ENCODE measurements at regions of chr5 and their contacts with region 1.

Region 1: GRCh38 chr5:33997331-33997983 is 10.4 kb downstream of the AMACR start:
- DNase-seq: peak; percentile 55
- ATAC-seq: peak; percentile 67
- H3K4me3 Mint-ChIP-seq: no peak overlapping the region
- H3K27ac Mint-ChIP-seq: no peak overlapping the region
- H3K4me1 Mint-ChIP-seq: peaks cover 28% of the 10 kb centered on the region
- H3K27me3 Mint-ChIP-seq: no peaks in the 10 kb centered on the region

Region 2: GRCh38 chr5:33936004-33936380 is 61.5 kb before region 1 on chr5:
- CTCF ChIA-PET with region 1: no interaction called
- POLR2A ChIA-PET with region 1: no interaction called
- DNase-seq: peak; percentile 65
- ATAC-seq: peak; percentile 82
- H3K4me3 Mint-ChIP-seq: no peak overlapping the region
- H3K27ac Mint-ChIP-seq: no peak overlapping the region
- H3K4me1 Mint-ChIP-seq: no peaks in the 10 kb centered on the region
- H3K27me3 Mint-ChIP-seq: peaks cover 53% of the 10 kb centered on the region

Region 3: GRCh38 chr5:33958176-33958575 is 39.3 kb before region 1 on chr5:
- CTCF ChIA-PET with region 1: no interaction called
- POLR2A ChIA-PET with region 1: no interaction called
- DNase-seq: no peak
- ATAC-seq: no peak
- H3K4me3 Mint-ChIP-seq: no peak overlapping the region
- H3K27ac Mint-ChIP-seq: no peak overlapping the region
- H3K4me1 Mint-ChIP-seq: no peaks in the 10 kb centered on the region
- H3K27me3 Mint-ChIP-seq: peaks cover 3% of the 10 kb centered on the region

Region 4: DNA sequence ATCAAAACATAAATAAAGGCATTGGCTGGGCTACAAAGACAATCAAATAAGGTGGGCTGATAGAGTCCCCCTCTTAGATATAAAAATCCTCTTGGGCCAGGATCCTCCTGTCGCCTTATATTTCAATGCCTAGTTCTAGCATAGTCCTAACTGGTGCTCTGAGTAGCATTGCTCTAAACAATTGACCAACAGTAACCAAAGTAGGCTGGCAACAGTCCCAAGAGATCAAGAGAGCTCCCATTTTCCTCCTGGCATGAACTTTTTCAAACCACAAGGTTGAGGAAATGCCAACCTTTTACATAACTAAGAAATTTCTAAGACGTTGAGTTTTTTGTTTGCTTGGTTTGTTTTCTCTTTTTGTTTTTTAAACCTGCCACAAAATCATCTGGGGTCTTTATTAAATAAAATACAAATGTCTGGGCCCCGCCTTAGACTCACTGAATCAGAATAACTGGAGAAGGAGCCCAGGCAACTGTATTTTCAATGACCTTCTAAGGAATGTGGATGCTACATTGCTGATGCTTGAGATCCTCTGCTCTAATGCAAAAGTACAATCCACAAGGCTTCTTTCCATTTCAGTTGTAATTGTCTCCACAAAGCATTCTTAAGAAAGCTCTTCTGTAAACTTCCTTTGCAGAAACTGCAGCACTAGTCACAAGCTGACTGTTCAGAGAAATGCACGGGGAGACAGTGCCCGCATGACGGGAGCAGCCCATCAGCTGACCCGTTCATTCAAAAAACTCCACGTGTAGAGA is 15.9 kb before region 1 on chr5:
- CTCF ChIA-PET with region 1: interaction called, 11 read pairs
- POLR2A ChIA-PET with region 1: interaction called, 3 read pairs
- DNase-seq: no peak
- ATAC-seq: no peak
- H3K4me3 Mint-ChIP-seq: no peak overlapping the region
- H3K27ac Mint-ChIP-seq: no peak overlapping the region
- H3K4me1 Mint-ChIP-seq: no peaks in the 10 kb centered on the region
- H3K27me3 Mint-ChIP-seq: no peaks in the 10 kb centered on the region

Region 5: DNA sequence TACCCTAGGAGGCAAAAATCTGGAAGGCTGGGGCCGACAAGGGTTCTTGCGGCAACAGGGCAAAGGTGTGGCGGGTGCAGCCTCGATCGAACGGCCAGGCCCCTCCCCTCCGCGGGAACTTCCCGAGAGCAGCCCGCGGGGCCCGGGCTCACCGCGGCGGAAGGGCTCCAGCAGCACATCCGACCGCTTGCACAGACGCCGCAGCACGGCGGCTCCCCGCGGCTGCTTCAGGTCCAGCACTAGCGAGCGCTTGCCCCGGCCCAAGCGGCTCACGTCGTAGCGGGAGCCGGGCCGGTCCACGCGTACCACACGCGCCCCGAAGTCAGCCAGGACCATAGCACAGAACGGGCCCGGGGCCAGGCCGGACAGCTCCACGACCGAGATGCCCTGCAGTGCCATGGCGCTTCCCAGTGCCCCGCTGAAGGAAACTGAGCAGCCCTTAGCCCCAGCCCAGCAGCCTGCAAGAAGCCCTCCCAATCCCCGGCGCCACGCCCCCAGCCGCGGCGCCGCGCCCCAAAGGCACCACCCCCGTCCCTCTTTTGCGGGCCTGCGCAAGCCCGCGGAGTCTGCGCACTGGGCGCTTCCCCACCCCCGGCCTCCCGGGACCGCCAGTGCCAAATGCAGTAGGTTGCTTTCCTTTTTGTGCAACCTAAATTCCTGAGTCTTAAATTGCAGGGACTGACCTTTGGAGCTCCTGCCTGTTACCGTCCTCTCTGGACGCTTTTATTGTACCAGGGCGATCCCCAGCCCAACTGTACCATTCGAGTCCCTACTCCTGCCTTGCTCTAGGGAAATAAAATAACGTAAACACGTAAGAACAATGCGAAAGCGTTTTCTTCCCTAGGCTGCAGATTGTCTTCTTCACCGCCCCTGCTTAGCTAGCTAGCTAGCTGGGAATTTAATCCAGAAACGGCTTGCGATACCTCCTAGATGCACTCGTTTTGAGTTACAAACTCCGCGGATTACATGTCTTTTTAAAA is 10.5 kb after region 1 on chr5 and contains the start of gene AMACR:
- CTCF ChIA-PET with region 1: interaction called, 19 read pairs
- POLR2A ChIA-PET with region 1: interaction called, 3 read pairs
- DNase-seq: peak; percentile 88
- ATAC-seq: peak; percentile 91
- H3K4me3 Mint-ChIP-seq: peak within 1 kb of the TSS; percentile 79
- H3K27ac Mint-ChIP-seq: peak within 1 kb of the TSS; percentile 90
- H3K4me1 Mint-ChIP-seq: peaks cover 32% of the 10 kb centered on the region
- H3K27me3 Mint-ChIP-seq: peaks cover 2% of the 10 kb centered on the region
- total RNA-seq, gene AMACR: 6.5 to 6.9 TPM

Region 6: GRCh38 chr5:34022121-34022705 is 24.8 kb after region 1 on chr5:
- CTCF ChIA-PET with region 1: interaction called, 16 read pairs
- POLR2A ChIA-PET with region 1: no interaction called
- DNase-seq: peak; percentile 73
- ATAC-seq: peak; percentile 97
- H3K4me3 Mint-ChIP-seq: peak overlapping the region; percentile 4
- H3K27ac Mint-ChIP-seq: peak overlapping the region; percentile 86
- H3K4me1 Mint-ChIP-seq: peaks cover 27% of the 10 kb centered on the region
- H3K27me3 Mint-ChIP-seq: no peaks in the 10 kb centered on the region

Measured in activated CD8-positive, alpha-beta T cell treated with anti-CD3 and anti-CD28 coated beads, Interleukin-2, amount 10 ng/mL, durations not matched to agents 7 days and 5 days (primary cell).